ENCODE measurements at regions of chr20 and their contacts with region 1.

Region 1: GRCh38 chr20:7285918-7286556 is 518.6 kb downstream of the BMP2 start:
- DNase-seq: peak; percentile 36 to 40
- H3K4me3 ChIP-seq: no peak overlapping the region
- H3K27ac ChIP-seq: no peak overlapping the region
- H3K4me1 ChIP-seq: no peaks in the 10 kb centered on the region
- H3K27me3 ChIP-seq: no peaks in the 10 kb centered on the region
- CTCF ChIP-seq: peak; percentile 86

Region 2: GRCh38 chr20:6767536-6768227 is 518.4 kb before region 1 on chr20 and contains the start of gene BMP2:
- CTCF ChIA-PET with region 1: no interaction called
- POLR2A ChIA-PET with region 1: no interaction called
- intact Hi-C with region 1: loop called (anchors 10 kb)
- DNase-seq: no peak
- H3K4me3 ChIP-seq: no peak within 1 kb of the TSS; the same call in 1 of the 2 replicates
- H3K27ac ChIP-seq: no peak within 1 kb of the TSS
- H3K4me1 ChIP-seq: no peaks in the 10 kb centered on the region
- H3K27me3 ChIP-seq: no peaks in the 10 kb centered on the region; the same call in 1 of the 2 replicates
- CTCF ChIP-seq: no peak
- total RNA-seq, gene BMP2: not detected in 2 replicates

Measured in PC-9 (cell line).